Left colon (tissue), 2 donors: ENCODE measurements at regions of chr16 and their contacts with region 1.

Region 1: DNA sequence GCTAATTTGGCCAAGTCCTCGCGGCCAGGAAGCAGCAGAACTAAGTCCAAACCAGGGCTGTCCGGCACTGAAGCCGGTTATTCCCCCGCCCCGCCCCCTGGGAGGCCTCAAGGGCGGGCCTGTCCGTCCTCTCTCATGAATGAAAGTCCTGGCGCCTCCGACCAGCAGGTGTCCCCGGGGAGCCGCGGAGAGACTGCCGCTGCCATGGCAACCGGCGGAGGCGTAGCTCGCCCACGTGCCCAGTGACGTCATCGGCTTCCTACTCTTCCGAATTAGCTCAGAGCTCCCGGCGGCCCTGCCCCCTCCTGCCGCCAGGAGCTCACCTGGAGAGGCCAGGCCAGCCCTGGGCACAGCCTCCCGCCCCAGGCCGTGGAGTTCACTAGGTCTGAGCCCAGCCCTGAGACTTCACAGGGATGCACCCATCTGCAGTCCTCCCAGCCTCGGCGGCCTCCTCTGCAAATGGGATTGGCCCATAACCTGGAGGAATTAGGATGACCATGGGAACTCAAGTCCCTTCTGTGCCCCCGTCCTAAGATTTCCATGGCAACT is 1.3 kb downstream of the SPATA2L start:
- DNase-seq: peak; percentile 100
- ATAC-seq: peak; percentile 62

Region 2: GRCh38 chr16:89599451-89599858 is 100.7 kb before region 1 on chr16:
- intact Hi-C with region 1: no loop called
- DNase-seq: peak in 1 of 2 donors; percentile 66
- ATAC-seq: peak; percentile 86

Region 3: GRCh38 chr16:89798832-89799370 is 98.7 kb after region 1 on chr16:
- intact Hi-C with region 1: loop called (anchors 10 kb)
- DNase-seq: no peak
- ATAC-seq: no peak